ENCODE measurements at regions of chr11 and their contacts with region 1.

Region 1: DNA sequence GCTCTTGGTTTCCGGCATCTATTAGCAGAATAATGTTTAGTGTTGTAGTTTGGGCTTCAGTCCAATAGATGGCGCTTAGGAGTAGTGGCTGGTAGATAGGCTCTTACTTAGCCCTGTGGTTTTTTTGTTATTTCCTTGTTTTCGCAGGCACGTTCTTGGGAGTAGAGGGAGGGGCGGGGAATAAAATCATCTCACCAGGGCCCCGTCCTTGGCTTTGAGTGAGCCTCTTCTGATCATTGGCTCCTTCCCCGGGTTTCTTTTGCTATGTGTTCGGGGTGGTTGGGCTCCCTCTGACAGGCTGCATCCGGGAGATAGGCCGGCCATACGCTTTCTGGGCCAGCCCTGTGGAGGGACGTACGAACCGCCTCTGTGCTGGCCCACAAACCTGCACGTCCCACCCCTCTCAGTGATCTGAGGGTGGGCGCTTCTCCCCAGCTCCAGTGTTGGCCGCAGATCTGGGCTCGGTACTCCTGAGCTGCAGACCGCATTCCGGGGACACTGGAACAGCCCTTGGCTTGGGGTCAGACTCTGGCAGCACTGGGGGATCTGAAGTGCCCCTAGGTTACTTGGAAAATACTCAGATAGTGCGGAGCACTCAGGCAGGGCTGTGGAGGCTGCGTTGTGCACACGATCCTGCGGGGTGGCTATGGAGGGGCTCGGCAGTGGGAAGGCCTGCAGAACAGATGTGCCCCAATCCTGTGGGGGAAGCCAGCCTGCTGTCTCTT is 217.0 kb downstream of the DYNC2H1 start:
- DNase-seq: no peak
- H3K4me3 Mint-ChIP-seq: no peak overlapping the region
- H3K27ac Mint-ChIP-seq: no peak overlapping the region
- H3K4me1 Mint-ChIP-seq: peaks cover 6% of the 10 kb centered on the region
- H3K27me3 Mint-ChIP-seq: no peaks in the 10 kb centered on the region

Region 2: GRCh38 chr11:103222806-103223205 is 103.4 kb before region 1 on chr11:
- CTCF ChIA-PET with region 1: no interaction called
- POLR2A ChIA-PET with region 1: no interaction called
- intact Hi-C with region 1: no loop called
- DNase-seq: no peak
- H3K4me3 Mint-ChIP-seq: no peak overlapping the region
- H3K27ac Mint-ChIP-seq: no peak overlapping the region
- H3K4me1 Mint-ChIP-seq: no peaks in the 10 kb centered on the region
- H3K27me3 Mint-ChIP-seq: no peaks in the 10 kb centered on the region

Region 3: DNA sequence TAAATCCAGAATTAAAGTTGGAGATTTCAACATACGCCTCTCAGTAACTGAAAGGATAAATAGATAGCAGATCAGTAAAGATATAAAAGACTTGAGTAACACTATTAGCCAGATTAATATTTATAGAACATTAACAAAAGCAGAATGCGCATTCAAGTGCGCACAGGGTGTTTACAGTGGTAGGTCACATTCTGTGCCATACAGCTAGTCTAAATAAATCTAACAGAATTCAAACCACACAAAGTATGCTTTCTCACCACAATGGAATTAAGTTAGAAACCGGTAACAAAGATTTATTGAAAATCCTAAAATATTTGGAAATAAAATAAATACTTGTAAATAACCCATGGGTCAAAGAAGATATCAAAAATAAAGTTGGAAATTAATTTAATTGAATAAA is 124.0 kb after region 1 on chr11:
- CTCF ChIA-PET with region 1: no interaction called
- POLR2A ChIA-PET with region 1: no interaction called
- intact Hi-C with region 1: loop called (anchors 10 kb)
- DNase-seq: no peak
- H3K4me3 Mint-ChIP-seq: no peak overlapping the region
- H3K27ac Mint-ChIP-seq: no peak overlapping the region
- H3K4me1 Mint-ChIP-seq: no peaks in the 10 kb centered on the region
- H3K27me3 Mint-ChIP-seq: no peaks in the 10 kb centered on the region

Region 4: DNA sequence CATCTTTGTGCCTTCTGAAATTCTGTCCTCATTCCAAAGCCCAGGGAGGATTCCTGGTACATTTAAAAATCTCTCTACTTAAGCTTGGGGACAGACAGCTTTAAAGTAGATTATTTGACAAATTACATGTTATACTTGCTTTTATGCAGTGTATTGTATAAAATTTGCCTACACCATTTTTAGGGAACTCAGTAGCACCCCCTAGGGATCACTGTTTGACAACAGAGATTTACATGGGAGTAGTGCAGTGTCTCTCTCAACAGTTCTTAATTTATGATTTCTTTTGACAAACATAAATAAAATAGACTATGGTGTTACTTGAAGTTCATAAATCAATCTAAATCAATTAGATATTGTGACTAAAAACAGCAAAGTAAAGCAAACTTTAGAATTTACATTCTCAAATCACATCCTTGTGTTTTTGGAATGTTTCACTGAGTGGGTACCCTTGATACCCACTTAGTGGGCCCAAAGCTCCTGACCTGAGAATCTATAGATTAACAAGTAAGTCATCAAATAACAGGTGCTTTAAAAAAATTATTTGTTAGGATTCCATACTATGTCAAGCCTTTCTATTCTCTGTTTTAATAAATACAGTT is 211.8 kb after region 1 on chr11:
- CTCF ChIA-PET with region 1: interaction called, 6 read pairs
- POLR2A ChIA-PET with region 1: no interaction called
- intact Hi-C with region 1: loop called (anchors 1 kb)
- DNase-seq: no peak
- H3K4me3 Mint-ChIP-seq: no peak overlapping the region
- H3K27ac Mint-ChIP-seq: no peak overlapping the region
- H3K4me1 Mint-ChIP-seq: no peaks in the 10 kb centered on the region
- H3K27me3 Mint-ChIP-seq: peaks cover 3% of the 10 kb centered on the region

Region 5: GRCh38 chr11:103566116-103566515 is 239.9 kb after region 1 on chr11:
- CTCF ChIA-PET with region 1: no interaction called
- POLR2A ChIA-PET with region 1: no interaction called
- intact Hi-C with region 1: no loop called
- DNase-seq: no peak
- H3K4me3 Mint-ChIP-seq: no peak overlapping the region
- H3K27ac Mint-ChIP-seq: no peak overlapping the region
- H3K4me1 Mint-ChIP-seq: no peaks in the 10 kb centered on the region
- H3K27me3 Mint-ChIP-seq: no peaks in the 10 kb centered on the region

Measured in activated CD4-positive, alpha-beta memory T cell treated with anti-CD3 and anti-CD28 coated beads for 36 hours (primary cell).